Activated B cell treated with CpG ODN at 0.5 μM for 24 hours (primary cell): ENCODE measurements at regions of chr12 and their contacts with region 1.

Region 1: GRCh38 chr12:118061011-118061875 is at the start of gene WSB2:
- DNase-seq: peak; percentile 63
- ATAC-seq: peak; percentile 46
- H3K4me3 Mint-ChIP-seq: peak within 1 kb of the TSS; percentile 86
- H3K27ac Mint-ChIP-seq: peak within 1 kb of the TSS; percentile 88
- H3K4me1 Mint-ChIP-seq: peaks cover 46% of the 10 kb centered on the region
- H3K27me3 Mint-ChIP-seq: no peaks in the 10 kb centered on the region
- CTCF ChIP-seq: no peak
- total RNA-seq, gene WSB2: 28.4 and 29.2 TPM in 2 replicates

Region 2: GRCh38 chr12:117963836-117964235 is 97.4 kb before region 1 on chr12:
- CTCF ChIA-PET with region 1: no interaction called
- POLR2A ChIA-PET with region 1: no interaction called
- intact Hi-C with region 1: no loop called
- DNase-seq: no peak
- ATAC-seq: no peak
- H3K4me3 Mint-ChIP-seq: no peak overlapping the region
- H3K27ac Mint-ChIP-seq: no peak overlapping the region
- H3K4me1 Mint-ChIP-seq: peaks cover 5% of the 10 kb centered on the region
- H3K27me3 Mint-ChIP-seq: peaks cover 28% of the 10 kb centered on the region
- CTCF ChIP-seq: no peak

Region 3: GRCh38 chr12:117980607-117981006 is 80.6 kb before region 1 on chr12:
- CTCF ChIA-PET with region 1: no interaction called
- POLR2A ChIA-PET with region 1: no interaction called
- intact Hi-C with region 1: no loop called
- DNase-seq: no peak
- ATAC-seq: no peak
- H3K4me3 Mint-ChIP-seq: no peak overlapping the region
- H3K27ac Mint-ChIP-seq: no peak overlapping the region
- H3K4me1 Mint-ChIP-seq: no peaks in the 10 kb centered on the region
- H3K27me3 Mint-ChIP-seq: peaks cover 4% of the 10 kb centered on the region
- CTCF ChIP-seq: no peak

Region 4: GRCh38 chr12:118035246-118036041 is 25.8 kb before region 1 on chr12:
- CTCF ChIA-PET with region 1: no interaction called
- POLR2A ChIA-PET with region 1: interaction called, 6 read pairs
- intact Hi-C with region 1: loop called (anchors 2 kb)
- DNase-seq: no peak
- ATAC-seq: peak; percentile 72
- H3K4me3 Mint-ChIP-seq: no peak overlapping the region
- H3K27ac Mint-ChIP-seq: peak overlapping the region; percentile 46
- H3K4me1 Mint-ChIP-seq: peaks cover 19% of the 10 kb centered on the region
- H3K27me3 Mint-ChIP-seq: no peaks in the 10 kb centered on the region
- CTCF ChIP-seq: no peak

Region 5: DNA sequence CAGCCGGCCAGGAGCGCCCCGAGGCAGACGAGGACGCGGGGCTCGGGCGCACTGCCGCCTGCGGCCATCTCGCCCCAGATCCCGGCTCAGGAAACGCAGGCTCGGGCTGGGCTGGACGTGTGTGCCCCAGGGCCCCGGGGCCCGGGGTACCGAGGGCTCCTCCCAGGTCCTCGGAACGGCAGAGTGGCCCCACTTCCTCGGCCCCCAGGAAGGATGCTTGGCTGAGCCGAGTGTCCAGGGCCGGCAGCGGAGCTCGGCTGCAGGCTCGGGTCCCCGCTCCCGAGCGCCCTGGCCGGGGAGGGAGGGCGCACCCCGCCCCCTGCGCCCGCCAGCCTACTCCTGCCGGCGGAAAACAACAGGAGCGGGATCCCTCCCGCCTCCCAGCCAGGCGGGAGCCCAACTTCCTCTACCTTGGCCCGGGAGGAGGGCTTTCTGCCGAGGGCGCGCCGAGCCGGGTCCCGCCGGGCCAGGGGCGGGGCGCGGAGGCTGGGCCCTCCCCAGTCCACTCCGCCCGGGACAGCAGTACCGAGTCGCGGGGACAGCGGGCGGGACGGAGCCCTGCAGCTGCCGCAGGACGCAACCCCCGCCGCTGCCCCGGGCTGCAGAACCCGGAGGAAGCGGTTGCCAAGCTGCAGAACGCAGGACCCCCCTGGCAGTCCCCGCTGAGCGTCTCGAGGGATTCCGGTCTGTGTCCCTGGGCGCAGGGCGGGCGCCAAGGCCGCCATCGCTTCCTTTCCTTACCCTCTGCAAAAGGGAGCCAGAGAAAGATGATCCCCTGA is 42.5 kb after region 1 on chr12 and contains the start of gene VSIG10:
- CTCF ChIA-PET with region 1: no interaction called
- POLR2A ChIA-PET with region 1: interaction called, 18 read pairs
- intact Hi-C with region 1: loop called (anchors 2 kb)
- DNase-seq: peak; percentile 29
- ATAC-seq: peak; percentile 82
- H3K4me3 Mint-ChIP-seq: peak within 1 kb of the TSS; percentile 84
- H3K27ac Mint-ChIP-seq: no peak within 1 kb of the TSS
- H3K4me1 Mint-ChIP-seq: peaks cover 9% of the 10 kb centered on the region
- H3K27me3 Mint-ChIP-seq: peaks cover 21% of the 10 kb centered on the region
- CTCF ChIP-seq: no peak
- total RNA-seq, gene VSIG10: 1.6 and 2.4 TPM in 2 replicates

Region 6: GRCh38 chr12:118120579-118121363 is 59.5 kb after region 1 on chr12:
- CTCF ChIA-PET with region 1: no interaction called
- POLR2A ChIA-PET with region 1: no interaction called
- intact Hi-C with region 1: loop called (anchors 5 kb)
- DNase-seq: peak; percentile 37
- ATAC-seq: peak; percentile 61
- H3K4me3 Mint-ChIP-seq: no peak overlapping the region
- H3K27ac Mint-ChIP-seq: peak overlapping the region; percentile 46
- H3K4me1 Mint-ChIP-seq: peaks cover 2% of the 10 kb centered on the region
- H3K27me3 Mint-ChIP-seq: no peaks in the 10 kb centered on the region
- CTCF ChIP-seq: peak; percentile 77

Region 7: DNA sequence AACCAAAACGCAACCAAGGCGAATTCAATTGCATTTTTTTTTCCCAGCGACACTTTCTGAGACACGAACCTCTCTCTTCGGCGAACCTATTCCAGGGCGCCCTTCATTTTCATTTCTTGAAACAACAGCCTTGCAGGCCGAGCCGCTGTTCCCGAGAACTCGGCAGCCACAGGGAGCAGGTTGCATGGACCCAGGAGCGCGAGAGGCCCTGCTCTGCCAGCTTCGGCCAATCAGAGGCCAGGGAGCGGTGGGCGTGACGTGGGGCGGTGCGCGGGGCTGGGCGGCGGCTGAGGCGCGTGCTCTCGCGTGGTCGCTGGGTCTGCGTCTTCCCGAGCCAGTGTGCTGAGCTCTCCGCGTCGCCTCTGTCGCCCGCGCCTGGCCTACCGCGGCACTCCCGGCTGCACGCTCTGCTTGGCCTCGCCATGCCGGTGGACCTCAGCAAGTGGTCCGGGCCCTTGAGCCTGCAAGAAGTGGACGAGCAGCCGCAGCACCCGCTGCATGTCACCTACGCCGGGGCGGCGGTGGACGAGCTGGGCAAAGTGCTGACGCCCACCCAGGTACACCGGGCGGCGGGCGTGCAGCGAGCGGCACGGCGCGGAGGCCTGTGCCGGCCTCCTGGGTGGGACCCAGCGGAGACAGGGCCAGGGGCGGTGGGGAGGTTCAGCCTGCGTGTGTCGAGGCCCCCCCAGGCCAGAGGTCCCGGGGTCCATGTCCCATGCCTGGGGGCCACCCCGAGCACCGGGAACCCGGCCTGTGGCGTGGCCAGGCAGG is 74.7 kb after region 1 on chr12 and contains the start of gene PEBP1:
- CTCF ChIA-PET with region 1: no interaction called
- POLR2A ChIA-PET with region 1: interaction called, 10 read pairs
- intact Hi-C with region 1: loop called (anchors 2 kb)
- DNase-seq: peak; percentile 91
- ATAC-seq: peak; percentile 99
- H3K4me3 Mint-ChIP-seq: peak within 1 kb of the TSS; percentile 98
- H3K27ac Mint-ChIP-seq: peak within 1 kb of the TSS; percentile 86
- H3K4me1 Mint-ChIP-seq: peaks cover 20% of the 10 kb centered on the region
- H3K27me3 Mint-ChIP-seq: no peaks in the 10 kb centered on the region
- CTCF ChIP-seq: no peak
- total RNA-seq, gene PEBP1: 102 and 114 TPM in 2 replicates

Region 8: GRCh38 chr12:118220702-118221101 is 159.5 kb after region 1 on chr12:
- CTCF ChIA-PET with region 1: no interaction called
- POLR2A ChIA-PET with region 1: interaction called, 12 read pairs
- intact Hi-C with region 1: no loop called
- DNase-seq: no peak
- ATAC-seq: no peak
- H3K4me3 Mint-ChIP-seq: no peak overlapping the region
- H3K27ac Mint-ChIP-seq: peak overlapping the region; percentile 75
- H3K4me1 Mint-ChIP-seq: peaks cover 23% of the 10 kb centered on the region
- H3K27me3 Mint-ChIP-seq: no peaks in the 10 kb centered on the region
- CTCF ChIP-seq: no peak

Region 9: GRCh38 chr12:118237052-118237665 is 175.9 kb after region 1 on chr12:
- CTCF ChIA-PET with region 1: no interaction called
- POLR2A ChIA-PET with region 1: no interaction called
- intact Hi-C with region 1: no loop called
- DNase-seq: no peak
- ATAC-seq: peak; percentile 90
- H3K4me3 Mint-ChIP-seq: peak overlapping the region; percentile 77
- H3K27ac Mint-ChIP-seq: peak overlapping the region; percentile 89
- H3K4me1 Mint-ChIP-seq: peaks cover 45% of the 10 kb centered on the region
- H3K27me3 Mint-ChIP-seq: no peaks in the 10 kb centered on the region
- CTCF ChIP-seq: no peak